ENCODE measurements at regions of chr1 and their contacts with region 1.

Region 1: GRCh38 chr1:77966291-77966690 is 12.6 kb downstream of the FUBP1 start:
- DNase-seq: no peak
- H3K4me3 ChIP-seq: no peak overlapping the region
- H3K27ac ChIP-seq: no peak overlapping the region
- H3K4me1 ChIP-seq: peaks cover 16 to 35% (median 30%) of the 10 kb centered on the region in 4 donors
- H3K27me3 ChIP-seq: no peaks in the 10 kb centered on the region
- CTCF ChIP-seq: no peak
- EP300 ChIP-seq: no peak
- POLR2A ChIP-seq: no peak

Region 2: GRCh38 chr1:77926561-77927357 is 39.5 kb before region 1 on chr1:
- intact Hi-C with region 1: loop called (anchors 5 kb)
- DNase-seq: no peak
- H3K4me3 ChIP-seq: peak overlapping the region; percentile 7 to 32 (median 22)
- H3K27ac ChIP-seq: peak overlapping the region; percentile 30 to 53 (median 32)
- H3K4me1 ChIP-seq: peaks cover 0 to 27% (median 16%) of the 10 kb centered on the region in 4 donors
- H3K27me3 ChIP-seq: no peaks in the 10 kb centered on the region
- CTCF ChIP-seq: no peak
- EP300 ChIP-seq: no peak
- POLR2A ChIP-seq: no peak